ENCODE measurements at regions of chr2 and their contacts with region 1.

Region 1: DNA sequence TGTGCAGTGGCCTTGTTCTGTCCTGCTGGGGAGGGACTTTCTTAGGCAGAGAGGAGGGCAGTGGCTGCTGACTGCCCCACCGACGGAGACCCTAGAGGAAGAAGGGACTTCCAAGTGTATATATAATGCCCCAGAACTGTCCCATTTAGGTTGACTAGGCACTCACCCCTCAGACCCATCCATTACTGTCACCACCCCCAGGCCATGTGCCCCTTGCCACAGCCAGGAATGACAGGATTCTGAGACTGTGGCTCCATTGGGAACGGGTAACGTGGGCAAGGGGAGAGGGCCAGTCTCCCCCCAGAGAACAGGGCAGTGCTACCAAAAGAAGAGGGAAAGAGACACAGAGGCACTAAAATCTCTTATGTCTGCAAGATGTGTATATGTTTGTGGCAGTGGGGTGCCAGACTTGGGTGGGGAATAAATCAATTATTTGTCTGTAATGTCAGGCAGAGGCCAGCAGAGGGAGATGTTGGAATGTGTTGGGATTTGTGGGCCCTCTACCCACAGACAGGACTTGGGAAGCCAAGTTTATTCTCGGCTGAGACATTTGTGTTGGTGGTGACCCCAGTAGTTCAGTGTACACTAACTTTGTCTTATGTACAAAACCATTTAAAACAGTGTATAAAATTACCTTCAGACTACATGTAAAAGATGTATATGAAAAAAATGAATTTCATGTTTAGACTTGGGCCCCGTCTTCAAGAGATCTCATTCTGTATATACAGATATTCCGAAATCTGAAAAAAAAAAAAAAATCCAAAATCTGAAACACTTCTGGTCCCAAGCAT is 24.0 kb upstream of the TMEM37 start:
- DNase-seq: peak; percentile 72
- H3K4me3 ChIP-seq: no peak overlapping the region
- H3K27ac ChIP-seq: no peak overlapping the region
- H3K4me1 ChIP-seq: peaks cover 9% of the 10 kb centered on the region
- H3K27me3 ChIP-seq: no peaks in the 10 kb centered on the region
- CTCF ChIP-seq: peak; percentile 71

Region 2: GRCh38 chr2:119476301-119477021 is 68.8 kb after region 1 on chr2:
- intact Hi-C with region 1: loop called (anchors 2 kb)
- DNase-seq: peak; percentile 49
- H3K4me3 ChIP-seq: no peak overlapping the region
- H3K27ac ChIP-seq: no peak overlapping the region
- H3K4me1 ChIP-seq: no peaks in the 10 kb centered on the region
- H3K27me3 ChIP-seq: no peaks in the 10 kb centered on the region
- CTCF ChIP-seq: peak; percentile 97

Region 3: GRCh38 chr2:119659601-119660342 is 252.1 kb after region 1 on chr2:
- intact Hi-C with region 1: loop called (anchors 5 kb)
- DNase-seq: peak; percentile 52
- H3K4me3 ChIP-seq: no peak overlapping the region
- H3K27ac ChIP-seq: no peak overlapping the region
- H3K4me1 ChIP-seq: no peaks in the 10 kb centered on the region
- H3K27me3 ChIP-seq: no peaks in the 10 kb centered on the region
- CTCF ChIP-seq: peak; percentile 77

Region 4: GRCh38 chr2:119771331-119771730 is 363.7 kb after region 1 on chr2:
- intact Hi-C with region 1: no loop called
- DNase-seq: no peak
- H3K4me3 ChIP-seq: no peak overlapping the region
- H3K27ac ChIP-seq: no peak overlapping the region
- H3K4me1 ChIP-seq: no peaks in the 10 kb centered on the region
- H3K27me3 ChIP-seq: no peaks in the 10 kb centered on the region
- CTCF ChIP-seq: no peak